GM12878 (cell line): ENCODE measurements at regions of chr3 and their contacts with region 1.

Region 1: DNA sequence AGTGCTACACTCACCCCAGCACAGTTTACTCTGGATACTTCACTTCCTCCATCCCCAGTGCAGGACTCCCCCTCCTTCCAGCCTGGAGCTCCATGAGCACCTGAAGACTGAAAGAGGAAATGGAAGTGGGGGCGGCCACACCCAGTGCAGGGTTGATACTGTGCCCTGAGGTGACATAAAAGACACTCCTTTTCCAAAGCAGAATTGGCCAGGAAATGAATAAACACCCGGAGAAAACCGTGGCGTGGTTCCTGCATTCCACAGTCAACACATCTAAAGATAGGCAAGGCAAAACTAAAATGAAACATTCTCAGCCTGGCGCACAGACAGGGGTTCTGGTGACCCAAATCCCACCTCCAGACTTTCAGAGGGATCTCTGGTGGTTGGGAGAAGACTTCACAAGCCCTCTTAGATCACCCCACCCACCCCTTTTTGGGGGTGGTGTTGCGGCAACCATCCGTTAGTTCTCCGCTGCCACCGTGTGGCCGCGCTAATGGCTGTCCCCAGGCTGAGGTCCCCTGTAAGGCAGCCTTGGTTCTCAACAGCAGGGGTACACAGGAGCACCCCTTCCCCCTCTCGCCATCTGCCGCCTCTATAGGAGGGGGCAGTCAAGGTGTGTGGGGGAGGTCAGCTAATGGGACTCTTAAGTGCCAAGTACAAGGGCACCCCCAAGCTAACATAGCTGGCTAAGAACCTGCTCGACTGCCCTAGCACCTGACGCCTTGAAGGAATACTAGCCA is 2.5 kb upstream of the MST1R start:
- DNase-seq: no peak
- ATAC-seq: peak; percentile 72
- H3K4me3 ChIP-seq: 0 out of 2 replicates have a peak overlapping the region, but pooled peaks have one; percentile 3
- H3K27ac ChIP-seq: peak overlapping the region; percentile 46
- H3K4me1 ChIP-seq: peaks cover 25% of the 10 kb centered on the region
- H3K27me3 ChIP-seq: no peaks in the 10 kb centered on the region
- CTCF ChIP-seq: peak; percentile 66 to 77 (median 71); a peak in 5 of 6 replicates
- EP300 ChIP-seq: no peak
- POLR2A ChIP-seq: no peak
- RAD21 ChIP-seq: peak; percentile 72

Region 2: GRCh38 chr3:49703443-49703927 is 202.7 kb before region 1 on chr3:
- CTCF ChIA-PET with region 1: interaction called, 4 read pairs
- POLR2A ChIA-PET with region 1: no interaction called
- RAD21 ChIA-PET with region 1: no interaction called
- SMC1A ChIA-PET with region 1: no interaction called
- in situ Hi-C with region 1: no loop called
- intact Hi-C with region 1: loop called (anchors 1 kb)
- DNase-seq: no peak
- ATAC-seq: peak; percentile 99
- H3K4me3 ChIP-seq: no peak overlapping the region
- H3K27ac ChIP-seq: no peak overlapping the region
- H3K4me1 ChIP-seq: no peaks in the 10 kb centered on the region
- H3K27me3 ChIP-seq: no peaks in the 10 kb centered on the region
- CTCF ChIP-seq: peak; percentile 85 to 96 (median 90); a peak in 5 of 6 replicates
- EP300 ChIP-seq: no peak
- POLR2A ChIP-seq: no peak
- RAD21 ChIP-seq: peak; percentile 71

Region 3: DNA sequence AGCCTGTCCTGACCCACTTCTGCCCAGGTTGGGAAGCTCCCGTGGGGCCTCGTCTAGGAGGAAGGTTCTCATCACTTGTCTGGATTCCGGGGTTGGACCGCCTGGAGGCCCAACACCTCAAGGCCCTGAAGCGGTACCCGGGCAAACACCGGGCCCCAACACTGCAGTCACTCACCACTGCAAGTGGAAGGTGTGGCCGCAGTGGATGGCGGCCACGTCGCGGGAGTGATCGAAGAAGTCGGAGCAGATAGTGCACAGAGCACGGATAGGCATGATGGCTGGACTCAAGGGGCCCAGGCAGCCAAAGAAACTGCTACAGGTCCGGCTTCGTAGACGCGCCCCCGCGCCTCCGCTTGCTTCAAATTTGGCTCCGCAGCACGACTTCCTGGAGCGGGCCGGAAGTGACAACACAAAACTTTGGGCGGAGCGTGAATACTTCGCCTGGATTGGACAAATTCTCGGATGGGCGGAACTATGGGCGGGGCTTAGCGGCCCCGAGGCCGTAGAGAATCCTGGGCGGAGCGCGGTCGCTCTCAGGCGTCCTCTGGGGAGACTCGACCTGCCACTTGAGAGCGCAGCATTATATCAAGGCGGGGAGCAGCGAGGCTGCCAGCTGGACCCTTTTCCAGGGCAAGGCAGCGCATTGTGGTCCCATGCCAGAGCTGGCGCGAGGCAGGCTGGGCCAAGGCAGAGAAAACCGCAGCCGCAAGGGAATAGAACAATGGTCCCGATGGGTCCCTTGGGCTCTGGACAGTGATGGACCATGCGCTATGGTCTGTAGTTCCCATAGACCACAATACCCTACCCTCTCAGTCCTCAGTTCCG is 49.8 kb before region 1 on chr3 and contains the start of gene TRAIP:
- CTCF ChIA-PET with region 1: interaction called, 5 read pairs
- POLR2A ChIA-PET with region 1: interaction called, 7 read pairs
- RAD21 ChIA-PET with region 1: interaction called, 4 read pairs
- SMC1A ChIA-PET with region 1: interaction called, 4 read pairs
- in situ Hi-C with region 1: no loop called
- intact Hi-C with region 1: loop called (anchors 5 kb)
- DNase-seq: peak; percentile 89
- ATAC-seq: peak; percentile 99
- H3K4me3 ChIP-seq: peak within 1 kb of the TSS; percentile 99
- H3K27ac ChIP-seq: peak within 1 kb of the TSS; percentile 36
- H3K4me1 ChIP-seq: no peaks in the 10 kb centered on the region
- H3K27me3 ChIP-seq: no peaks in the 10 kb centered on the region
- CTCF ChIP-seq: peak in 1 of 3 experiments; percentile 17; a peak in 1 of 6 replicates
- EP300 ChIP-seq: no peak
- POLR2A ChIP-seq: peak; percentile 79
- RAD21 ChIP-seq: no peak
- polyA plus RNA-seq, gene TRAIP: 33.6 to 37.0 TPM

Region 4: GRCh38 chr3:50749822-50750221 is 843.6 kb after region 1 on chr3:
- CTCF ChIA-PET with region 1: no interaction called
- POLR2A ChIA-PET with region 1: no interaction called
- RAD21 ChIA-PET with region 1: no interaction called
- SMC1A ChIA-PET with region 1: no interaction called
- in situ Hi-C with region 1: no loop called
- intact Hi-C with region 1: no loop called
- DNase-seq: no peak
- ATAC-seq: no peak
- H3K4me3 ChIP-seq: no peak overlapping the region
- H3K27ac ChIP-seq: no peak overlapping the region
- H3K4me1 ChIP-seq: no peaks in the 10 kb centered on the region
- H3K27me3 ChIP-seq: no peaks in the 10 kb centered on the region; a peak in 1 of 4 replicates
- CTCF ChIP-seq: no peak
- EP300 ChIP-seq: no peak
- POLR2A ChIP-seq: no peak
- RAD21 ChIP-seq: no peak